Activated naive CD4-positive, alpha-beta T cell treated with anti-CD3 and anti-CD28 coated beads for 36 hours (primary cell): ENCODE measurements at regions of chr22 and their contacts with region 1.

Region 1: DNA sequence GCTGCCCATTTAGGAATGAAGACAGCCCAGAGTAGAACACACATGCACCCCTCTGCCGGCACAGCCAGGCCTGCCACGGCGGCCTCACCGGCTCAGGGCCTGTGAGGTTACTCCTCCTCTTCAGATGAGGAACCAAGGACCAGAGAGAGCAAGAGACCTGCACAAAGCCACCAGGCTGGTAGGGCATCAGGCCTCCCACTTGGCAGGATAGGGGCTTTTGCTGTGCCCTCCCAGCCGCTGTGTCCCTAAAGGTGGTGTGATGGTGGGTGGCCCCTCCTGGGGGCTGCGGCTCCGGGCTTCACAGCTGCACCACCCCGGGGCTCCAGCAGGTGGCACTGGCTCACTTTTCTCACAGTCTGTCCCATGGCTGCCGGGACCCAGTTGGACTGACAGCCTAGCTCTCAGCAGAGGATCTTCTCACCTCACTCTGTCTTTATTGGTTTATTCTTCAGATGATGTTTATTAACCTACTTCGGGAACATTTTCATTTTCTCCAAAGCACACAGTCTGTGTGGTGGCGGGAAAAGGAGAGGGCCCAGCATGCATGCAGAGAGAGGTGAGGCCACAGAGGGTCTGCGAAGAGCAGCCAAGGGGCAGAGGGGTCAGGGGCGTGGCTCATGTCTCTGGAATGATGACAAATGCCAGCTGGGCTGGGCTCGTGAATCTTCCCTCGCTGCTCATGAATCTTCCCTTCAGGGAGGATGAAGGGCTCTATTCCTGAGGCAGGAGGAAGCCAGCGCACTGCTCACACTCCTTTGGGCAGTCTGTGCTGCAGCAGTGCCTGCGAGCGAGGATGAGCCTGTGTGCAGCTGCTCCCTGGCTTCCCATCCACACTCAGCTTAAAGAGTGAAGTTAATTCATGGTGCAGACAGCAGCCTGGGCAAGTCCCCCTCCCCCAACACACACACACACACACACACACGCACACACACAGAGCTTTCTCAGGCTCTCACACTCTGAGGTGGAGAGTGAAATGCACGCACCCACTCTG is 101.1 kb upstream of the PITPNB start:
- DNase-seq: peak; percentile 78
- H3K4me3 Mint-ChIP-seq: no peak overlapping the region
- H3K27ac Mint-ChIP-seq: no peak overlapping the region
- H3K4me1 Mint-ChIP-seq: peaks cover 2% of the 10 kb centered on the region
- H3K27me3 Mint-ChIP-seq: no peaks in the 10 kb centered on the region

Region 2: DNA sequence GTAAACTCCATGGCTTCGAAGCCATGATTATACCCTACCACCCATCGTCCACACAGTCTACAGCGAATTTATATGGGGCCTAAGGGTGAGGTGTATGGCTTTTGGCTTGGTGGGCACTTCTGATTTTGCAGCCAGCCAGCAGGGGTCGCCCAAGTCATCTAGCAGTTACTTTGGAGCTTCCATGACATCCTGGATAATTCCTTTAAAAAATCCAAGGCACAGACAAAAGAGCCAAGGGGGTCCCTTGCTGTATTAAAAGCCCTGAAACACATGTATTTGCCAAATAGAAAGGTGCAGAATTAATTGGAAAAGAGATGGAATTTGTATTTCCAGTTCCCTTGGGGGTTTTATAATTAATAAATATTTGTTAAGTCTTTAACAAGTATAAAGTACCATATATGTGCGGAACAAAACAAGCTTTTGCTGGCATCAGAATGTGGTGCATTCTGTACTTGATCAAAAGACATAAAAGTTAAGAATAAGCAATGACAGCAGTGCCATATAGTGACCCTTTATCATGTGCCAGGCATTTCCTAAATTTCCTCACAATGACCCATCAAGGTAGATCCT is 31.7 kb after region 1 on chr22:
- CTCF ChIA-PET with region 1: interaction called, 4 read pairs
- intact Hi-C with region 1: loop called (anchors 1 kb)
- DNase-seq: peak; percentile 58
- H3K4me3 Mint-ChIP-seq: no peak overlapping the region
- H3K27ac Mint-ChIP-seq: no peak overlapping the region
- H3K4me1 Mint-ChIP-seq: no peaks in the 10 kb centered on the region
- H3K27me3 Mint-ChIP-seq: no peaks in the 10 kb centered on the region

Region 3: GRCh38 chr22:28594797-28595462 is 574.8 kb after region 1 on chr22:
- CTCF ChIA-PET with region 1: interaction called, 7 read pairs
- intact Hi-C with region 1: loop called (anchors 1 kb)
- DNase-seq: no peak
- H3K4me3 Mint-ChIP-seq: no peak overlapping the region
- H3K27ac Mint-ChIP-seq: no peak overlapping the region
- H3K4me1 Mint-ChIP-seq: no peaks in the 10 kb centered on the region
- H3K27me3 Mint-ChIP-seq: peaks cover 4% of the 10 kb centered on the region